A549 (cell line): ENCODE measurements at regions of chr4 and their contacts with region 1.

Region 1: GRCh38 chr4:1809754-1810511 is 16.8 kb downstream of the FGFR3 start:
- DNase-seq: peak; percentile 69 to 72
- ATAC-seq: peak; percentile 85 to 94
- H3K4me3 ChIP-seq: no peak overlapping the region
- H3K27ac ChIP-seq: no peak overlapping the region
- H3K4me1 ChIP-seq: no peaks in the 10 kb centered on the region
- CTCF ChIP-seq: peak; percentile 85
- EP300 ChIP-seq: no peak
- POLR2A ChIP-seq: no peak
- RAD21 ChIP-seq: peak; percentile 86 to 87

Region 2: DNA sequence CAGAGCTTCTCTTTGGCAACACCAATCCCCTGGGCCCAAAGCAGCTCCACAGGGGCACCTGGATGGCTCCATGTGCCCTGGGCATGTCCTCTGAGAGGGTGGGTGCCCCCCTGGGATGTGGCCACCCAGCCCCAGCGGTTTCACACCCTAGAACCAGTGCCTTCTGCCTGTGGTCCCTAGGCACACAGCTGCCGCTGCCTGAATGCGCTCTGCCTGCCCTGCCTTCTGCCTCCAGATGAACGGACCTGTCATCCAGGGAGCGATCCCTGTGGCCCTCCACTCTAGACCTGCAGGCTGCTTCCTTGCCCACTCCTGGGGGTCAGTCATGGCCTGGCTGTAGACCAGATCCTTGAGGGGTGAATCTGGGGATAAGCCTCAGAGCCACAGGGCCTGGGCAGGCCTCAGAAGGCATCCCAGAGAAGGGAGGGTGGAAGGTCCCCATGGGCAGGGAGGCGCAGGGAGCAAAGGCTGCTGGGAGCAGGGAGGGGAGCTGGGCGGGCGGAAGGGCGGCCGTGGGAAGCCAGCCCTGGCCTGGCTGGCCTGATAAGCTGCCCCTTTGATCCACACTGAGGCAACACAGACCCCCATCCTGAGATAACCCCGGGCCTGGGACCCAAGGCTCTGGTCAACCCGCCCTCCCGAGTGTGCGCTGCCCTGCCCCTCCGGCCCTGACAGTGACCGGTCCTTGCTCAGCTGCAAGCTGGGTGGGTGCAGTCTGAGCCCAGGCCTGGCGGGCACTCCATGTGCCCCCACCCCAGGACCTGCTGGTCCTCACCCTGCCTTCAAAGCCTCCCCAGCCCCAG is 24.9 kb before region 1 on chr4:
- CTCF ChIA-PET with region 1: interaction called, 12 read pairs
- POLR2A ChIA-PET with region 1: no interaction called
- DNase-seq: no peak
- ATAC-seq: peak in 1 of 2 experiments; percentile 25; a peak in 2 of 6 replicates
- H3K4me3 ChIP-seq: no peak overlapping the region
- H3K27ac ChIP-seq: no peak overlapping the region
- H3K4me1 ChIP-seq: no peaks in the 10 kb centered on the region
- CTCF ChIP-seq: no peak
- EP300 ChIP-seq: no peak
- POLR2A ChIP-seq: no peak
- RAD21 ChIP-seq: no peak

Region 3: GRCh38 chr4:1792832-1793495 is 17.0 kb before region 1 on chr4 and contains the start of gene FGFR3:
- CTCF ChIA-PET with region 1: interaction called, 79 read pairs
- POLR2A ChIA-PET with region 1: no interaction called
- DNase-seq: peak in 1 of 2 experiments; percentile 54
- ATAC-seq: peak; percentile 26 to 63
- H3K4me3 ChIP-seq: peak within 1 kb of the TSS; percentile 62
- H3K27ac ChIP-seq: peak within 1 kb of the TSS; percentile 66 to 91
- H3K4me1 ChIP-seq: peaks cover 18% of the 10 kb centered on the region
- CTCF ChIP-seq: no peak
- EP300 ChIP-seq: no peak
- POLR2A ChIP-seq: peak; percentile 88
- RAD21 ChIP-seq: no peak
- polyA plus RNA-seq, gene FGFR3: 1.6 and 1.9 TPM in 2 replicates

Region 4: DNA sequence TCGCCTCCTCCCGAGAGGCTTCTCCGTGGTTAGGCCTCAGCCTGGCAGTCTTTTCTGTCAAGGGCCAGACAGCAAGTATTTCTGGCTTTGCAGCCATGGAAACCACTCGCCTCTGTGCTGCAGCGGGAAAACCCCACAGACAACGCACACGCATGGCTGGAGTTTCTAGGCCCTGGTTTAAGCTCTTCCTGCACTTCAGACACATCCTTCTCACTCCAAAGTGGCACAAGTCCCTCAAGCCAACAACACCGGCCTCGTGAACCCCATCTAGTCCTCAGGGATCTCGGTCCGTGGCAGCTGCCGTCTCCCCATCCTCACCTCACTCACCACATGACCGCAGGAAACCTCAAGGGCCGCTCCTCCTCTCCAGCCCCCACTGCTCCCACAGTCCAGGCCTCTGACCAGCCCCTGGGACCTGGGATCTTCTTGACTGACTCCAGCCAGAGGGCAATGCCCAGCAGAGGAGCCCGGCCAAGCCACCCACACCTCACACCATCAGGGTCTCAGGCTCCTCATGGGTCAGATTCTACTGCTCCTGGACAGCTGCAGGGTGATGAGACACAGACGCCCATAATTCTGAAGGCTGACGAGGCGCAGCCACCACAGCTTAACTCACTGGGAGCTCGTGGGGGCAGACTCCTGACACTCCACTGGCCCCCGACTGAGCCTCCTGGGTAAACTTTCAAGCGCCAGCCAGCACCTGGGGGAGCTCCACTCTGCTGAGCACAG is 24.3 kb after region 1 on chr4:
- CTCF ChIA-PET with region 1: interaction called, 11 read pairs
- POLR2A ChIA-PET with region 1: no interaction called
- DNase-seq: no peak
- ATAC-seq: no peak
- H3K4me3 ChIP-seq: no peak overlapping the region
- H3K27ac ChIP-seq: no peak overlapping the region
- H3K4me1 ChIP-seq: no peaks in the 10 kb centered on the region
- CTCF ChIP-seq: no peak
- EP300 ChIP-seq: no peak
- POLR2A ChIP-seq: no peak
- RAD21 ChIP-seq: no peak